ENCODE measurements at regions of chr9 and their contacts with region 1.

Region 1: GRCh38 chr9:130707225-130707976 is 13.8 kb downstream of the EXOSC2 start:
- DNase-seq: no peak

Region 2: GRCh38 chr9:130745210-130745800 is 37.9 kb after region 1 on chr9:
- intact Hi-C with region 1: no loop called
- DNase-seq: no peak

Region 3: DNA sequence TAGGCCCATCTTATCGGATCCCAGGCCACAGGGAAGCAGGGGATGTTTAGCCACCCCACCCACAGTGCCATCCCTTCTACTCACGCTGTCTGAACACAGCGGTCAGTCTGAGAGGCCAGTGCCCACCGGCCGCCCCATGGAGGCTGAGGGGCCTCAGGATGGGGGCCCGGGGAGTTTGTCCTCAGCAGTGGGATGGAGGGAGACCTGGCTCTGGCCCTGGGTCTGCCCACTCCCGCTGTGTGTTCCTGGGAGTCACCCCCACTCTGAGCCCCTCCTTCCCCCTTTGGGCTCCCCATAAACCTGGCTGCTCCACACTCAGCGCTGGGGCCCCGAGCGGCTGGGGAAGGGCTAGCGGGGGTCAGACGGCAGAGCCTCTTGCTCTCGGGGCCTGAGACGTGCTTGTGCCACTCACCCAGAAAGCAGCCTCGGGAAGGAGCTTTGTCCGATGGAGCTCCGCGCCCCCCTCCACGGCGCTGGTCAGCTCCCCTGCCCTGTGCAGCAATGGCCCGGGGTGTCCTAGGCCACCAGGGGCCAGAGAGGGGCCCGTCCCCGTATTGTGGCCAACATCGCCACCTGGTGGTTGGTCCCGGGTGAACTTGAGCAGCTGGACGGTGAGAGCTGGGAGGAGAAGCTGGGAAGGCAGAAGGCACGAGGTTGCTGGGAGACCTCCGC is 290.7 kb after region 1 on chr9:
- intact Hi-C with region 1: loop called (anchors 5 kb)
- DNase-seq: no peak

Region 4: DNA sequence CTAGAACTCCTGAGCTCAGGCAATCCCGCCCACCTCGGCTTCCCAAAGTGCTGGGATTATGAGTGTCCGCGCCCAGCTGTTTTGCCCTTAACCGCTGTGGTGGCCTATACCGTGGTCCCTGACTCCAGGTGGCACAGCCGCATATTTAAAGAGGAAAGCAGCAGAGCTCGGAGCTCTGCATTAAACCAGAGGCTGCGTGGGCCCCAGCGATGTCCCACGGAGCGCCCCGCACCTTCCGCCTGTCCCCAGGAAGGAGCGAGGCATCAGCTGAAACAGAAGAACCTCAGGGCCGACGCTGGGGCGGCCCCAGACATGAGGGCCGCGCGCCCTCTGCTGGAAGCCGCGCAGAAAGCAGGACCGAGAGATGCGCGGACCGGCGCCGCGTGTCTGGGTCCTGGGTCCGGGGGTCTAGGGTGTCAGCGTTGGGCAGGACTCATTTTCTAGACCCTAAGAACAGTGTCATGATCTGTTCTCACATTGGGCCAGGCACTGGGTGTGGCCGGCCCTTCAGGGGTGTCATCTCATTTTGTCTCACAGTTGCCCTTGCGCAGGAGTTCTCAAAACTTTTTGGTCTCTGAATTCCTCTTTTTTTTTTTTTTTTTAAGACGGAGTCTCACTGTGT is 339.3 kb after region 1 on chr9:
- intact Hi-C with region 1: loop called (anchors 5 kb)
- DNase-seq: no peak